ENCODE measurements at regions of chr20 and their contacts with region 1.

Region 1: GRCh38 chr20:23050847-23051631 is 1.6 kb upstream of the THBD start:
- DNase-seq: peak; percentile 93
- ATAC-seq: peak; percentile 60

Region 2: GRCh38 chr20:23235173-23236027 is 184.4 kb after region 1 on chr20:
- intact Hi-C with region 1: loop called (anchors 5 kb)
- DNase-seq: peak; percentile 86
- ATAC-seq: peak; percentile 97

Measured in Right ventricle myocardium superior (tissue), 1 donor.